Caco-2 (cell line): ENCODE measurements at regions of chr2 and their contacts with region 1.

Region 1: GRCh38 chr2:185862657-185863398 is 124.2 kb downstream of the FSIP2 start:
- DNase-seq: no peak
- H3K4me3 ChIP-seq: no peak overlapping the region
- H3K4me3 Mint-ChIP-seq: peak overlapping the region; percentile 91
- H3K27ac Mint-ChIP-seq: no peak overlapping the region
- H3K4me1 ChIP-seq: peaks cover 7% of the 10 kb centered on the region; the same call in 1 of the 2 replicates
- H3K4me1 Mint-ChIP-seq: peaks cover 5% of the 10 kb centered on the region
- H3K27me3 ChIP-seq: no peaks in the 10 kb centered on the region
- H3K27me3 Mint-ChIP-seq: no peaks in the 10 kb centered on the region
- CTCF ChIP-seq: no peak

Region 2: DNA sequence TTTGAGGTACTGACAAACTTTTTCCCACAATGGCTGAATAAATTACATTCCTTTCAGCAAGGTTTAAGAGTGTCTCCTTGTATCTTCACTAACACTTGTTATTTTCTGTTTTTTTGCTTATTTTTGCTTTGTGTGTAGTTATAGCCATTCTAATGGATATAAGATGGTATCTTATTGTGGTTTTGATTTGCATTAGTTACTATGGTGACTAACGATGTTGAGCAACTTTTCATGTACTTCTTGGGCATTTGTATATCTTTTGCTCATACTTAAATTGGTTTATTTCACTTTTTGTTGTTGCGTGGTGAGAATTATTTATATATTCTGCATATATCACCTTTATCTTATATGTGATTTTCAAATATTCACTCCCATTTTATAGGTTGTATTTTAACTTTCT is 204.1 kb before region 1 on chr2:
- CTCF ChIA-PET with region 1: no interaction called
- POLR2A ChIA-PET with region 1: no interaction called
- intact Hi-C with region 1: no loop called
- DNase-seq: no peak
- H3K4me3 ChIP-seq: no peak overlapping the region
- H3K4me3 Mint-ChIP-seq: no peak overlapping the region
- H3K27ac Mint-ChIP-seq: no peak overlapping the region
- H3K4me1 ChIP-seq: no peaks in the 10 kb centered on the region
- H3K4me1 Mint-ChIP-seq: no peaks in the 10 kb centered on the region
- H3K27me3 ChIP-seq: no peaks in the 10 kb centered on the region
- H3K27me3 Mint-ChIP-seq: no peaks in the 10 kb centered on the region
- CTCF ChIP-seq: no peak

Region 3: GRCh38 chr2:185813682-185814081 is 49.1 kb before region 1 on chr2:
- CTCF ChIA-PET with region 1: no interaction called
- POLR2A ChIA-PET with region 1: no interaction called
- intact Hi-C with region 1: loop called (anchors 5 kb)
- DNase-seq: peak; percentile 28 to 50
- H3K4me3 ChIP-seq: no peak overlapping the region
- H3K4me3 Mint-ChIP-seq: no peak overlapping the region
- H3K27ac Mint-ChIP-seq: no peak overlapping the region
- H3K4me1 ChIP-seq: peaks cover 7% of the 10 kb centered on the region
- H3K4me1 Mint-ChIP-seq: peaks cover 9% of the 10 kb centered on the region
- H3K27me3 ChIP-seq: no peaks in the 10 kb centered on the region
- H3K27me3 Mint-ChIP-seq: no peaks in the 10 kb centered on the region
- CTCF ChIP-seq: no peak